ENCODE measurements at regions of chr3 and their contacts with region 1.

Region 1: GRCh38 chr3:122101646-122102045 is 46.5 kb downstream of the CD86 start:
- DNase-seq: peak; percentile 18
- H3K4me3 Mint-ChIP-seq: peak overlapping the region; percentile 5
- H3K27ac Mint-ChIP-seq: peak overlapping the region; percentile 60
- H3K4me1 Mint-ChIP-seq: peaks cover 39% of the 10 kb centered on the region
- H3K27me3 Mint-ChIP-seq: no peaks in the 10 kb centered on the region

Region 2: DNA sequence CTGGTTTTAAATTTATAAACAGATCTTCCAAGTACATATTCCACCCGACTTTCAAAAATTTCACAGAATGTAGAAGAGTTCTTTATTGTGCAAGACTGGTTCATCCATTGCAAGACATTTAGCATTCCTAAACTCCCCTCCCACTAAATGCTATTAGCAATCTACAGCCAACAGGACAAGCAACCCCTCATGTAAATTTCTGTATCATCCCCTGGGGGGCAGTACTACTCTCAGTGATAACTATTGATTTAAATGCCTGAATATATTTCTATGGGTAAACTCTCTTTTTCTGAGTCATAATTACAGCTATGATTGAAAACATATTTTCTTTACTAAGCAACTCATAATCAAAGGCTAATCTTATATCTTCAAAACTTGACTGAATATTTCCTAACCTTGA is 218.1 kb before region 1 on chr3:
- CTCF ChIA-PET with region 1: no interaction called
- intact Hi-C with region 1: loop called (anchors 2 kb)
- DNase-seq: no peak
- H3K4me3 Mint-ChIP-seq: no peak overlapping the region
- H3K27ac Mint-ChIP-seq: no peak overlapping the region
- H3K4me1 Mint-ChIP-seq: no peaks in the 10 kb centered on the region
- H3K27me3 Mint-ChIP-seq: no peaks in the 10 kb centered on the region

Region 3: GRCh38 chr3:122052968-122053367 is 48.7 kb before region 1 on chr3:
- CTCF ChIA-PET with region 1: no interaction called
- intact Hi-C with region 1: no loop called
- DNase-seq: no peak
- H3K4me3 Mint-ChIP-seq: no peak overlapping the region
- H3K27ac Mint-ChIP-seq: no peak overlapping the region
- H3K4me1 Mint-ChIP-seq: no peaks in the 10 kb centered on the region
- H3K27me3 Mint-ChIP-seq: peaks cover 18% of the 10 kb centered on the region

Region 4: GRCh38 chr3:122146466-122146865 is 44.8 kb after region 1 on chr3:
- CTCF ChIA-PET with region 1: interaction called, 7 read pairs
- intact Hi-C with region 1: loop called (anchors 1 kb)
- DNase-seq: peak; percentile 86
- H3K4me3 Mint-ChIP-seq: no peak overlapping the region
- H3K27ac Mint-ChIP-seq: peak overlapping the region; percentile 46
- H3K4me1 Mint-ChIP-seq: peaks cover 28% of the 10 kb centered on the region
- H3K27me3 Mint-ChIP-seq: peaks cover 1% of the 10 kb centered on the region

Region 5: DNA sequence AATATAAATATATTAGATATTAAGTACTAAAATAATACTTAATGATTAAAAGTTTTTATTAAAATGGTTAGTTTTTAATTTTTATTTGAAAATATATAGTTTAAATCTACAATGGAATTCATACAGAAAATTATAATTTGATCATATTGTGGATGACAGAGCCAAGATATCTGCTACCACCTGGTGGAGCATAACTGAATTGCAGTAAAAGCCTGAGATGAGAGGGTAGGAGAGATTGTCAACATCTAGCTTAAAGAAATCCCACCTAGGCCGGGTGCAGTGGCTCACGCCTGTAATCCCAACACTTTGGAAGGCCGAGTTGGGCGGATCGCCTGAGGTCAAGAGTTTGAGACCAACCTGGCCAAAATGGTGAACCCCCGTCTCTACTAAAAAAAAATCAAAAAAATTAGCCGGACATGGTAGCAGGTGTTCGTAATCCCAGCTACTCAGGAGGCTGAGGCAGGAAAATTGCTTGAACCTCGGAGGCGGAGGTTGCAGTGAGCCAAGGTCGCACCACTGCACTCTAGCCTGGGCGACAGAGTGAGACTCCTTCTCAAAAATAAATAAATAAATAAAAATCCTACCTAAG is 198.3 kb after region 1 on chr3:
- CTCF ChIA-PET with region 1: interaction called, 31 read pairs
- intact Hi-C with region 1: loop called (anchors 1 kb)
- DNase-seq: peak; percentile 64
- H3K4me3 Mint-ChIP-seq: no peak overlapping the region
- H3K27ac Mint-ChIP-seq: no peak overlapping the region
- H3K4me1 Mint-ChIP-seq: peaks cover 16% of the 10 kb centered on the region
- H3K27me3 Mint-ChIP-seq: peaks cover 1% of the 10 kb centered on the region

Region 6: DNA sequence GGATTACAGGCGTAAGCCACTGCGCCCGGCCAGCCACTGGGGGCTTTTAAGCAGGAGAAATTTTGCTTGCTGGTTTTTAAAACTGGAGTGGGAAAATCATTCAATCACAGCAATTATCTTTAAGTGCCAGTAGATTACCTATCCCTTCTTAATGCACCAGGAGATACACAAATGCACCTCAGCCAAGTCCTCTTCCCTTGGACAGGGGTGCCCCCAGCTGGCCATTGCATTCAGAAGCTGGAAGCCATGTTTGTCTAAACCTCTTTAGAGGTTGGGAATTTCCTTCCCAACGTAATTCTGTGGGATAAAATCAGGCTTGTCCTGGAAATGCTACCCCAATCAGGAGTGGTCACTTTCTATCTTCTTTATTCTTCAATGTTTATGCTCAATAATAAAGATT is 254.8 kb after region 1 on chr3:
- CTCF ChIA-PET with region 1: interaction called, 4 read pairs
- intact Hi-C with region 1: loop called (anchors 1 kb)
- DNase-seq: peak; percentile 63
- H3K4me3 Mint-ChIP-seq: no peak overlapping the region
- H3K27ac Mint-ChIP-seq: no peak overlapping the region
- H3K4me1 Mint-ChIP-seq: peaks cover 2% of the 10 kb centered on the region
- H3K27me3 Mint-ChIP-seq: no peaks in the 10 kb centered on the region

Region 7: GRCh38 chr3:122793568-122794416 is 692.1 kb after region 1 on chr3 and contains the start of gene HSPBAP1:
- CTCF ChIA-PET with region 1: no interaction called
- intact Hi-C with region 1: loop called (anchors 10 kb)
- DNase-seq: peak; percentile 92
- H3K4me3 Mint-ChIP-seq: peak within 1 kb of the TSS; percentile 86
- H3K27ac Mint-ChIP-seq: peak within 1 kb of the TSS; percentile 80
- H3K4me1 Mint-ChIP-seq: peaks cover 30% of the 10 kb centered on the region
- H3K27me3 Mint-ChIP-seq: no peaks in the 10 kb centered on the region
- total RNA-seq, gene HSPBAP1: 3.0 to 3.2 TPM